ENCODE measurements at regions of chr6 and their contacts with region 1.

Region 1: DNA sequence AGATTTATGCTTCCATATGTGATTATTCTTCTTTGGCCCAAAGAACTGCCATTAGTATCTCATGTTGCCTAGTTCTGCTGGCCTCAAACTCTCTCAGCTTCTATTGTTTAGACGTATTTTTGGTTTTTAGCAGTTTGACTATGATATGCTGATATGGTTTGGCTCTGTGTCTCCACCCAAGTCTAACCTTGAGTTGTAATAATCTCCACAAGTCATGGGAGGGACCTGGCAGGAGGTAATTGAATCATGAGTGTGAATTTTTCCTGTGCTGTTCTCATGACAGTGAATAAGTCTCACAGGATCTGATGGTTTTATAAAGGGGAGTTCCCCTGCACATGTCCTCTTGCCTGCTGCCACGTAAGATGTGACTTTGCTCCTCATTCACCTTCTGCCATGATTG is 96.7 kb upstream of the ARG1 start:
- DNase-seq: no peak
- H3K4me3 ChIP-seq: no peak overlapping the region
- H3K27ac ChIP-seq: no peak overlapping the region
- H3K4me1 ChIP-seq: no peaks in the 10 kb centered on the region
- H3K27me3 ChIP-seq: no peaks in the 10 kb centered on the region
- CTCF ChIP-seq: no peak

Region 2: GRCh38 chr6:129875610-129876520 is 1600.5 kb before region 1 on chr6:
- CTCF ChIA-PET with region 1: no interaction called
- POLR2A ChIA-PET with region 1: interaction called, 11 read pairs
- intact Hi-C with region 1: no loop called
- DNase-seq: no peak
- H3K4me3 ChIP-seq: no peak overlapping the region
- H3K27ac ChIP-seq: no peak overlapping the region
- H3K4me1 ChIP-seq: no peaks in the 10 kb centered on the region
- H3K27me3 ChIP-seq: no peaks in the 10 kb centered on the region
- CTCF ChIP-seq: no peak

Region 3: DNA sequence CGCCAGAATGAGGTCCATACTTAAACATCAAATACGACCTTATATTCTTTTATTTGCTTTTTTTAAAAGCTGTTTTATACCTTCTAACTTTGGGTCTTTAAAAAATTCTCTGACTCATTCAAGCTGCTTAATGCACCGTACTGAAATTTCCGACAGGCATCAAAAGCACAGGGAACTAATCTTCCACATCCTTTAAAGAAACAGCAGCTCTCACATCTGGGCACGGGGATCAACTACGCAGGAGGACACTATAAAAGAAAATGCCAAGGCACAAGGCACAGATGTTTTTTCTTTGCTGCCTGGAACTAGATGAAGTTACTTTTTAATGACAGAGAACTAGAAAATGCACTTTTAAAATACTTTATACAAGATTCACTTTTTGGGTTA is 15.8 kb before region 1 on chr6:
- CTCF ChIA-PET with region 1: no interaction called
- POLR2A ChIA-PET with region 1: no interaction called
- intact Hi-C with region 1: no loop called
- DNase-seq: no peak
- H3K4me3 ChIP-seq: no peak overlapping the region
- H3K27ac ChIP-seq: no peak overlapping the region
- H3K4me1 ChIP-seq: no peaks in the 10 kb centered on the region
- H3K27me3 ChIP-seq: no peaks in the 10 kb centered on the region
- CTCF ChIP-seq: no peak

Region 4: DNA sequence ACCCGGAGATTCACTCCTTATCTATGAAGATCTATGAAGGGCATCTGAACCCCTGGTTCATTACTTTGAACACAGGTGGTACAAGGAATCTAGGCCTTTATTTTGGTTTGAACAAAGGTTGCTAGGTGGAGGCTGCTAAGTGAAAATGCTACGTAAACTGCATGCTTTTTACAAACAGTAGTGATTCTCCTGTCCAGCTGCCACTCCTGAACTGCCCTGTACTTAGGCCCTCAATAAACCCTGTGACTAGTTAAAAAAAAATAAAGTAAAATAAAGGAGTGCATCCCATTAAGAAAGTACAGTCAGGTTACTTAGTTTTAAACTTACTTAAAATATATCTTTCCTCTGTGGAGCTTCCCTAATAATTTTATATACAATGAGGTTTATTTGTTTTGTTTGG is 69.0 kb after region 1 on chr6:
- CTCF ChIA-PET with region 1: no interaction called
- POLR2A ChIA-PET with region 1: no interaction called
- intact Hi-C with region 1: no loop called
- DNase-seq: no peak
- H3K4me3 ChIP-seq: no peak overlapping the region
- H3K27ac ChIP-seq: no peak overlapping the region
- H3K4me1 ChIP-seq: no peaks in the 10 kb centered on the region
- H3K27me3 ChIP-seq: no peaks in the 10 kb centered on the region
- CTCF ChIP-seq: no peak